ENCODE measurements at regions of chr10 and their contacts with region 1.

Region 1: GRCh38 chr10:61896854-61897661 is 4.4 kb upstream of the ARID5B start:
- DNase-seq: peak; percentile 20 to 76 (median 66)
- ATAC-seq: peak; percentile 80
- H3K4me3 ChIP-seq: peak overlapping the region; percentile 51
- H3K4me3 Mint-ChIP-seq: peak overlapping the region; percentile 77 to 98 (median 86)
- H3K27ac ChIP-seq: no peak overlapping the region
- H3K27ac Mint-ChIP-seq: peak overlapping the region; percentile 46 to 99 (median 86)
- H3K4me1 ChIP-seq: peaks cover 18 to 27% of the 10 kb centered on the region in 2 donors
- H3K4me1 Mint-ChIP-seq: peaks cover 12 to 35% (median 33%) of the 10 kb centered on the region in 7 donors
- H3K27me3 ChIP-seq: no peaks in the 10 kb centered on the region
- H3K27me3 Mint-ChIP-seq: no peaks in the 10 kb centered on the region

Region 2: DNA sequence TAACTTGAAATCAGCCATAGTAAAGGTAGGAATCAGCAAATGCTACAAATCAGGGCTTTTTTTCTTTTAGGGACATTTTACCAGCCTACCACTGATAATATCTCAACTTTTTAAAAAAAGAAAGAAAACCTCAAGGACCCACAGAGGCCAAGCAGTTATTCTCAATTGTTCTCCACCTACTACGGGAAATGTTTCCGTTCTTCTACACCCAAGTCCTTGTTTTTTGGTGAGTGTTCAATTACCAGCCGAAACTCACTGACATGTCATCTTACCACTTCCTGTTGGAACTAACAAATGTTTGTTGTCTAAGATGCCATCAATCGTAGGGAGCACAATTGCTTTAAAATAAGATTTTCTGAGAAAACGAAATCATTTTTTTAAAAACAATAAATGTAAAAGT is 1169.0 kb before region 1 on chr10:
- CTCF ChIA-PET with region 1: no interaction called
- POLR2A ChIA-PET with region 1: no interaction called
- intact Hi-C with region 1: loop called in 1 of 2 experiments (anchors 1 kb)
- DNase-seq: peak in 7 of 9 donors; percentile 51 to 85 (median 78)
- ATAC-seq: peak; percentile 73
- H3K4me3 ChIP-seq: peak overlapping the region; percentile 57
- H3K4me3 Mint-ChIP-seq: peak overlapping the region; percentile 74 to 94 (median 83)
- H3K27ac ChIP-seq: peak overlapping the region; percentile 89
- H3K27ac Mint-ChIP-seq: peak overlapping the region; percentile 84 to 98 (median 94)
- H3K4me1 ChIP-seq: peaks cover 28 to 64% of the 10 kb centered on the region in 2 donors
- H3K4me1 Mint-ChIP-seq: peaks cover 35 to 86% (median 77%) of the 10 kb centered on the region in 7 donors
- H3K27me3 ChIP-seq: no peaks in the 10 kb centered on the region
- H3K27me3 Mint-ChIP-seq: peaks cover 0 to 7% (median 0%) of the 10 kb centered on the region in 5 donors

Region 3: DNA sequence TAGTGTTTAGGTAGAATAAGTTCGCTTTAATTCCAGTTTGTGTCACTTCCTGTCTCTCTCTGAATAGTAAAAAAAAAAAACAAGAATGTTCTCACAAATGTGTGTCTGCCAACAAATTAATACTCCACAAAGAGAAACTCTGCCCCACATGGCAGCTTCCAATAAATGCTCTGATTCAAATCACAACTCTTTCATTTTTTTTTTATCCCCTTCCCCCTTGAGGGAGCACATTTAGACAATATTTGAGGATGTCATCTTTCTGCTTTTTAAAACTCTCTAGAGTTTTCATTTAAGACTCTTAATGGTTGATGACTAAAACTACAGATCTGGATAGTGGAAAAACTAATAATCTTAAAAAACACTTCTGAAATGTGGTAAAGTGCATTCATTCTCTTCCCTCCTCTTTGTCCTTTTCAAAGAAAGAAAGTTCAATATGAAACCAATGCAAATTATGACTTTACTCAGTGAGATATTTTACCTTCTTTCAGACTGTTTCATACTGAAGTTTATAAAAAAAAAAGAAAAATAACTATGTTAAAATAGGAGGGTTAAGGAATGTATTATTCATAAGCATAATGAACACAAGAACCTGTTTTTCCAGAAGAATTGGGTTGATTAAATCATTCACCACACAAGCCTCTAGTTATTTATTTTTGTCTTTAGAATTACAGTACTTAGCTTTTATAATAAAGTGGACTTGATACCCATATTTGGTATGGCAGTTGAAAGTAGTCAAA is 46.8 kb after region 1 on chr10:
- CTCF ChIA-PET with region 1: interaction called, 4 read pairs
- POLR2A ChIA-PET with region 1: interaction called, 7 read pairs
- intact Hi-C with region 1: loop called (anchors 1 kb)
- DNase-seq: peak in 7 of 9 donors; percentile 25 to 58 (median 36)
- ATAC-seq: peak; percentile 65
- H3K4me3 ChIP-seq: peak overlapping the region; percentile 15
- H3K4me3 Mint-ChIP-seq: peak overlapping the region; percentile 60 to 86 (median 69)
- H3K27ac ChIP-seq: peak overlapping the region; percentile 58
- H3K27ac Mint-ChIP-seq: peak overlapping the region; percentile 47 to 94 (median 88)
- H3K4me1 ChIP-seq: peaks cover 28 to 46% of the 10 kb centered on the region in 2 donors
- H3K4me1 Mint-ChIP-seq: peaks cover 29 to 55% (median 51%) of the 10 kb centered on the region in 7 donors
- H3K27me3 ChIP-seq: no peaks in the 10 kb centered on the region
- H3K27me3 Mint-ChIP-seq: no peaks in the 10 kb centered on the region

Region 4: DNA sequence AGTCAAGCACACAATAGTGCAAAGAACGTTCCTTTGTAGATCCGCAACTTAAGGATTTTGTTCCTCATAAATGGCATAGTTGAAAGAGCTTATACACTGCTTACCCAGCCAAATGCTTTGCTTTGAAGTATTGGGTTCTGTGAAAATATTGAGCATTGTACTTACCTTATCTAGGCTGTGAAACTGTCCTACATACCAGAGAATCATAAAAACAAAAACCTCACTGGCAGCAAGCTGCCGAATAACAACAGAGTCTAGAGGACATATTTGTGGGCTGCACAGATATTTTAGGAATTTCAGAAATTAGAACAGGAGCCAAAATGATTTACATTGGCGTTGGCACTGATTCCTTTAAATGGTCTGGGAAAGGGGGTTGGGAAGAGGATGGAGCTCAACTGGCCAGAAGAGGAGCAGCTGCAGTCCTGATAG is 196.8 kb after region 1 on chr10:
- CTCF ChIA-PET with region 1: no interaction called
- POLR2A ChIA-PET with region 1: no interaction called
- intact Hi-C with region 1: loop called in 1 of 2 experiments (anchors 5 kb)
- DNase-seq: no peak
- ATAC-seq: no peak
- H3K4me3 ChIP-seq: no peak overlapping the region
- H3K4me3 Mint-ChIP-seq: no peak overlapping the region
- H3K27ac ChIP-seq: no peak overlapping the region
- H3K27ac Mint-ChIP-seq: peak overlapping the region in 6 of 9 donors; percentile 29 to 80 (median 45)
- H3K4me1 ChIP-seq: no peaks in the 10 kb centered on the region
- H3K4me1 Mint-ChIP-seq: peaks cover 0 to 55% (median 26%) of the 10 kb centered on the region in 7 donors
- H3K27me3 ChIP-seq: no peaks in the 10 kb centered on the region
- H3K27me3 Mint-ChIP-seq: no peaks in the 10 kb centered on the region

Region 5: DNA sequence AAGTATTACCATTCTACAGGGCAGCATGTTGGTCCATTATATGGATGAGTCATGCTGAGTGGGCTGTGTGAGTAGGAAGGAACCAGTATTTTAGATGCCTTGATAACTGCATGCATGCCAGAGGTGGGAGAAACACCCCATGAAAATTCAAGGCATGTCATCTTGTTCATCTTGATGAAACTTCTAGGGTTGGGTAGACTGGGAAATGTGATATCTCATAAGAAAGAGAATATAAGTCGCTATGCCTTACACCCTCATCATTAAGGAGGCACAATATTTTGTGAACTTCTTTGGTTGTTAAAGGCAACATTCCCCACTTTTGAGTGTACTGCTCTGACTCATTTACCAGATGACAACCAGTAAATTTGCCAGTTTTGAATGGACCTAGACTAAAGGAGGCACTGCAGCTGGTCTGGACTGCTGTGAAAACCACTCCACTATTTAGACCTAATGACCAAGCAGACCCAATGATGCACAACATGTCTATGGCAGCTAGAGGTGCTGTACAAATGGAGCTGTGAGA is 525.1 kb after region 1 on chr10:
- CTCF ChIA-PET with region 1: no interaction called
- POLR2A ChIA-PET with region 1: no interaction called
- intact Hi-C with region 1: loop called in 1 of 2 experiments (anchors 5 kb)
- DNase-seq: no peak
- ATAC-seq: no peak
- H3K4me3 ChIP-seq: no peak overlapping the region
- H3K4me3 Mint-ChIP-seq: no peak overlapping the region
- H3K27ac ChIP-seq: no peak overlapping the region
- H3K27ac Mint-ChIP-seq: no peak overlapping the region
- H3K4me1 ChIP-seq: no peaks in the 10 kb centered on the region
- H3K4me1 Mint-ChIP-seq: peaks cover 0 to 2% (median 0%) of the 10 kb centered on the region in 7 donors
- H3K27me3 ChIP-seq: no peaks in the 10 kb centered on the region
- H3K27me3 Mint-ChIP-seq: peaks cover 9 to 18% (median 10%) of the 10 kb centered on the region in 5 donors

Measured in naive thymus-derived CD4-positive, alpha-beta T cell (primary cell).